ENCODE measurements at regions of chr17 and their contacts with region 1.

Region 1: GRCh38 chr17:69533481-69534234 is 119.2 kb downstream of the MAP2K6 start:
- DNase-seq: no peak
- H3K4me3 ChIP-seq: no peak overlapping the region
- H3K27ac ChIP-seq: no peak overlapping the region
- H3K4me1 ChIP-seq: no peaks in the 10 kb centered on the region
- H3K27me3 ChIP-seq: no peaks in the 10 kb centered on the region
- CTCF ChIP-seq: no peak
- POLR2A ChIP-seq: no peak

Region 2: DNA sequence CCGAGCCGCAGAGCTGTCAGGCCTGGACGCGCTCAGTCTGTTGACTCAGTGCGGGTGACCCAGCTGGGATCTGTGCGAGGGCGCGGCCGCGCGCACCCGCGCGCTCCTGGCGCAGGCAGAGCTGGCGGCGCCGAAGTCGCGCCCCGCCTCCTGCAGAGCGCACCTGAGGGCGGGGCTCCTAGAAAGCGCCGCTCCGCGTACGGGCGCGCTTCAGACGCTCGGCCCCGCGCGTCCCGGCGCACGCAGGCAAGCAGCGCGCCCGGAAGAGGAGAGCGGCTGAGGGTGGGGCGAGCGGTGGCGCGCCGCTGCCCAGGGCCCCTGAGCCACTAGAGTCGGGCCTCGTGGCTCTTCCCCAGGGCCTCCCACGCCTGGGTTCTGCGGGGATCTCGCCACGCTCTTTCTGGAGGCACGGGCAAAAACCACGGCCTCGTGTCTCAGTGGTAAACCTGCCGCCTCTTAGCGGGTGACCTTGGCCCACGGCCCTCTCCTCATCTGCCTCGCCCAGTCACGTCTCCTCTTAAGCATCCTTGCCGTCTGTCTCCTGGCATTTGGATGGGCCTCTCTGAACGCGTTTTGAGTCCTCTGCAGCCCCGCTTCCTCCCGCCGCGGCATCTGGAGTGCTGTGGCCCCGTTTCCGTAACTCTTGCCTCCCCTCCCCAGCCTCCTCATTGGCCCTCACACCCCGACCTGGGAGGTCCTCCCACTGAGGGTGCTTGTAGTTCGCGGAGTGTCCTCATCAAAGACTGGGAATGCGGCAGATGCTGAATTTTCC is 206.4 kb before region 1 on chr17 and contains the start of gene ABCA5:
- intact Hi-C with region 1: loop called (anchors 5 kb)
- DNase-seq: peak; percentile 85 to 88
- H3K4me3 ChIP-seq: peak within 1 kb of the TSS; percentile 65 to 82 (median 66)
- H3K27ac ChIP-seq: peak within 1 kb of the TSS; percentile 87 to 90
- H3K4me1 ChIP-seq: no peaks in the 10 kb centered on the region
- H3K27me3 ChIP-seq: no peaks in the 10 kb centered on the region
- CTCF ChIP-seq: no peak
- POLR2A ChIP-seq: peak; percentile 24
- total RNA-seq, gene ABCA5: 88.8 to 152 (median 93.1) TPM

Measured in breast epithelium (tissue), 4 donors.